Endothelial cell of umbilical vein (primary cell): ENCODE measurements at regions of chr3 and their contacts with region 1.

Region 1: GRCh38 chr3:184250167-184250828 is 826 bp downstream of the EEF1AKMT4 start:
- DNase-seq: peak; percentile 89
- H3K4me3 ChIP-seq: peak overlapping the region; percentile 15 to 100 (median 76)
- H3K27ac ChIP-seq: no peak overlapping the region
- H3K4me1 ChIP-seq: peaks cover 7% of the 10 kb centered on the region
- H3K27me3 ChIP-seq: no peaks in the 10 kb centered on the region
- CTCF ChIP-seq: peak; percentile 88 to 93
- POLR2A ChIP-seq: no peak

Region 2: GRCh38 chr3:183895296-183895695 is 355.0 kb before region 1 on chr3:
- CTCF ChIA-PET with region 1: interaction called, 21 read pairs
- POLR2A ChIA-PET with region 1: no interaction called
- dilution Hi-C with region 1: no loop called
- intact Hi-C with region 1: loop called (anchors 1 kb)
- DNase-seq: peak; percentile 43
- H3K4me3 ChIP-seq: no peak overlapping the region
- H3K27ac ChIP-seq: no peak overlapping the region
- H3K4me1 ChIP-seq: no peaks in the 10 kb centered on the region
- H3K27me3 ChIP-seq: peaks cover 6 to 13% of the 10 kb centered on the region in 2 experiments
- CTCF ChIP-seq: peak; percentile 75 to 78
- POLR2A ChIP-seq: no peak

Region 3: DNA sequence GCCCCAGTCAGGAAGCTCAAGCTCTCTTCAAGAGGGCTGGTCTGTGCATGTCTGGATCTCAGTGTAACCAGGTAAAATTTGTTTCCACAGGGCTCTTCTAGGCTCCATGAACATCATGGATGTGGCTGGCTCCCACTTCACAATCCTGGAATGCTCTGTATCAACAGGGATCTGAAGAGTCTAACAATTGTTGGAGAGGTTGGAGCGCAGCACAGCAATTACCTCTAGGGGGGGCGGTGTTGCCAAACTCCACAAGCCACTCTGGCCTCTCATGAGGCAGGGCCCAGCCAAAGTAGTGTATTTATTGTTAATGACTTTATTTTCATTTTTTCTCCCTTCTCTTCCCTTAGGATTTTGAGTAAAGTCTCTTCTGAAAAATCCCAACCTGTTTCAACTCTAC is 121.3 kb before region 1 on chr3:
- CTCF ChIA-PET with region 1: no interaction called
- POLR2A ChIA-PET with region 1: no interaction called
- dilution Hi-C with region 1: no loop called
- intact Hi-C with region 1: loop called (anchors 1 kb)
- DNase-seq: peak; percentile 36
- H3K4me3 ChIP-seq: no peak overlapping the region
- H3K27ac ChIP-seq: no peak overlapping the region
- H3K4me1 ChIP-seq: peaks cover 9% of the 10 kb centered on the region
- H3K27me3 ChIP-seq: no peaks in the 10 kb centered on the region
- CTCF ChIP-seq: peak; percentile 41 to 45
- POLR2A ChIP-seq: no peak

Region 4: GRCh38 chr3:184154885-184155643 is 95.2 kb before region 1 on chr3 and contains the start of gene DVL3:
- CTCF ChIA-PET with region 1: no interaction called
- POLR2A ChIA-PET with region 1: no interaction called
- dilution Hi-C with region 1: no loop called
- intact Hi-C with region 1: loop called (anchors 1 kb)
- DNase-seq: peak; percentile 40
- H3K4me3 ChIP-seq: peak within 1 kb of the TSS; percentile 78 to 87 (median 83)
- H3K27ac ChIP-seq: peak within 1 kb of the TSS; percentile 25
- H3K4me1 ChIP-seq: peaks cover 17% of the 10 kb centered on the region
- H3K27me3 ChIP-seq: no peaks in the 10 kb centered on the region
- CTCF ChIP-seq: no peak
- POLR2A ChIP-seq: peak; percentile 61
- total RNA-seq, gene DVL3: 59.0 and 61.3 TPM in 2 replicates

Region 5: DNA sequence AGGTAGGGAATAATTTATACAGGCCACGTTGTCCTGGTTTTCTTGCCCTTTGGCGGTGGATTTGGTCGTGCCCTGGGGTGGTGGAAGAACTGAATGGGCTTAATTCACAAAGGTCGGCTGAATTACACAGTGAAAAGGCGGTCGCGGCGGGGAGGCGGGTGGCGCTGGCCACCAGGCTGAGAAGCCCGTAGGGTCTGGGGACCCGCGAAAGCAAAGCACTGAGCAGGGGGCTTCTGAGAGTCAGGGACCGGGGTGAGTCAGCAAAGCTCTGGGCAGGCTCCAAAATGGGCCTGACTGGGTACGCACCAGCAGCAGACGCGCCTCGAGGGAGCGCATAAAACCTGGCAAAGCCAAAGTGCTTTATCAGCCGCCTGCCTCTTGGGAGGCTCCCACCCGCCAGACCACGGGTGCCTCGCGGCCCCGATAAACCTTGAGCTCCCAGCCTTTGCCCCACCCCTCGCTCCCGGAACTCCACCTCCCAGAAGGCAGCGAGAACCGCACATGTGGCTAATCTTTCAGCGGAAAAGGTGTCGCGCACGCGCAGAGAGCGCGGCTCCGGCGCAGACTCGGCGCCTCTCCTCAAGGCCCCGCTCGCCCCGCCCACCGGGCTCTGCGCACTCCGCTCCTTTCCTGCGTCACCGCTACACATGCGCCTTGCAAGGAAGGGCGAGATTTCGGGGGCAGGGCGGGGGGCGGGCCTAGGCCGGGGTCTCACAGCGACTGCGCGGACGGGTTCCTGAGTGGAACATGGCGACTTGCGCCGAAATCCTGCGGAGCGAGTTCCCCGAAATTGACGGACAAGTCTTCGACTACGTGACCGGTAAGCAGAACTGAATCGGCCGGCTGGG is 64.6 kb before region 1 on chr3 and contains the start of gene ABCF3:
- CTCF ChIA-PET with region 1: interaction called, 6 read pairs
- POLR2A ChIA-PET with region 1: no interaction called
- dilution Hi-C with region 1: no loop called
- intact Hi-C with region 1: loop called (anchors 1 kb)
- DNase-seq: peak; percentile 99
- H3K4me3 ChIP-seq: peak within 1 kb of the TSS; percentile 5 to 92 (median 54)
- H3K27ac ChIP-seq: peak within 1 kb of the TSS; percentile 64
- H3K4me1 ChIP-seq: peaks cover 14% of the 10 kb centered on the region
- H3K27me3 ChIP-seq: no peaks in the 10 kb centered on the region
- CTCF ChIP-seq: no peak
- POLR2A ChIP-seq: peak; percentile 87
- total RNA-seq, gene ABCF3: 65.6 and 68.8 TPM in 2 replicates

Region 6: DNA sequence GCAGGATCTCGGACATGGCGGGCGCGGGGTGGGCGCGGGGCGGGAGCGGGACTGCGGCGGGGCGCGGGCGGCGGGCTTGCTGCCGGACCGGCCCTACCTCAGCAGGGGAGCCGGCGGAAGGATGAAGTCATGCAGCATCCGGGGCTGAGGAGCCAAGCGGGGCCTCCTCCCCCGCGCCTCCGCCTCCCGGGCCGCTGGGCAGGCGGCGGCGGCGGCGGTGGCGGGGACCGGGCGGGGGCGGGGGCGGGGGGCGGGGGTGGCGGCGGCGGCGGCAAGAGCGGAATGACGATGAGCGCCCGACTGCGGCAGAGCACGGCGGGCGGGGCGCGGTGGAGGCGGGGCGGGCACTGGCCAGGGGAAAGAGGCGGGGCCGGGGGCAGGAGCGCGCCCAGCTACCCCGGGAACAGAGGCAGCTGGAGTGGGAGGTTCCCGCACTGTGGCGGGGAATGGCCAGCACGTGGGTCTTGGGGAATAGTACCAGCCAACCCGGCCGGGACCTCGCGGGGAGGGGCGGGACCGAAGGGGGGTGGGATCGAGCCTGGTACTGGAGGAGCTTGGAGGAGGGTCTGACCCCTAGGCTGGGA is 11.1 kb after region 1 on chr3 and contains the start of gene CAMK2N2:
- CTCF ChIA-PET with region 1: interaction called, 15 read pairs
- POLR2A ChIA-PET with region 1: no interaction called
- dilution Hi-C with region 1: no loop called
- intact Hi-C with region 1: no loop called
- DNase-seq: no peak
- H3K4me3 ChIP-seq: peak within 1 kb of the TSS in 2 of 3 experiments; percentile 24 to 28
- H3K27ac ChIP-seq: no peak within 1 kb of the TSS
- H3K4me1 ChIP-seq: peaks cover 13% of the 10 kb centered on the region
- H3K27me3 ChIP-seq: peaks cover 26 to 36% of the 10 kb centered on the region in 2 experiments
- CTCF ChIP-seq: no peak
- POLR2A ChIP-seq: no peak
- total RNA-seq, gene CAMK2N2: not detected in 2 replicates

Region 7: DNA sequence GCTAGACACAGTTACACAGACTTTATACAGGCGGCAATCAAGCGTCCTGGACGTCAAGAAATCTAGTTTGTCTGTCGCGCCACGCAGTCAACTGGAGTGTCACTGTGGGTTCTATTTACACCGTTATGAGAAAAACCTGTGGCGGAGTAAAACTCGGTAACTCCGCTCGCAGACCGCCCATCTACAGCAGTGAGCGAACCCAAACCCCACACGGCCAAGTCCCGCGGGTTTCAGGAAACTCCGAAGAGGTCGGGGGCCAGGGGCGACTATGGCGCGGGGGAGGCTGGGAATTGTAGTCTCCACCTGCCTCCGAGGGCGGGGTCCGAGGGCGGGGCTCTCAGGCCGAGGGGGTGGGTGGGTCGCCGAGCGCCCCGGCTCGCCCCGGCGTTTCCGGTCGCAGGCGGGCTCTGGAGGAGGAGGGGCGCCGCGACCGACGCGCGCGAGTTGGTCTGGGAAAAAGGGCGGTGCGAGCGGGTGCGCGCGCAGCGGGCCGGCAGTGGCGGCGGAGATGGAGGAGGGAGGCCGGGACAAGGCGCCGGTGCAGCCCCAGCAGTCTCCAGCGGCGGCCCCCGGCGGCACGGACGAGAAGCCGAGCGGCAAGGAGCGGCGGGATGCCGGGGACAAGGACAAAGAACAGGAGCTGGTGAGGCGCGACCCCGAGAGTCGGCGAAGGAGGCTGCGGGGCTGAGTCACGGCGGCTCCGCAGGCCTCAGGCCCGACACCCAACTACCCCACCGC is 48.6 kb after region 1 on chr3 and contains the start of gene PSMD2:
- CTCF ChIA-PET with region 1: interaction called, 6 read pairs
- POLR2A ChIA-PET with region 1: no interaction called
- dilution Hi-C with region 1: no loop called
- intact Hi-C with region 1: loop called (anchors 1 kb)
- DNase-seq: peak; percentile 96
- H3K4me3 ChIP-seq: peak within 1 kb of the TSS; percentile 71 to 89 (median 88)
- H3K27ac ChIP-seq: peak within 1 kb of the TSS; percentile 70
- H3K4me1 ChIP-seq: peaks cover 13% of the 10 kb centered on the region
- H3K27me3 ChIP-seq: peaks cover 0 to 3% of the 10 kb centered on the region in 2 experiments
- CTCF ChIP-seq: no peak
- POLR2A ChIP-seq: peak; percentile 85
- total RNA-seq, gene PSMD2: 400 and 435 TPM in 2 replicates

Region 8: DNA sequence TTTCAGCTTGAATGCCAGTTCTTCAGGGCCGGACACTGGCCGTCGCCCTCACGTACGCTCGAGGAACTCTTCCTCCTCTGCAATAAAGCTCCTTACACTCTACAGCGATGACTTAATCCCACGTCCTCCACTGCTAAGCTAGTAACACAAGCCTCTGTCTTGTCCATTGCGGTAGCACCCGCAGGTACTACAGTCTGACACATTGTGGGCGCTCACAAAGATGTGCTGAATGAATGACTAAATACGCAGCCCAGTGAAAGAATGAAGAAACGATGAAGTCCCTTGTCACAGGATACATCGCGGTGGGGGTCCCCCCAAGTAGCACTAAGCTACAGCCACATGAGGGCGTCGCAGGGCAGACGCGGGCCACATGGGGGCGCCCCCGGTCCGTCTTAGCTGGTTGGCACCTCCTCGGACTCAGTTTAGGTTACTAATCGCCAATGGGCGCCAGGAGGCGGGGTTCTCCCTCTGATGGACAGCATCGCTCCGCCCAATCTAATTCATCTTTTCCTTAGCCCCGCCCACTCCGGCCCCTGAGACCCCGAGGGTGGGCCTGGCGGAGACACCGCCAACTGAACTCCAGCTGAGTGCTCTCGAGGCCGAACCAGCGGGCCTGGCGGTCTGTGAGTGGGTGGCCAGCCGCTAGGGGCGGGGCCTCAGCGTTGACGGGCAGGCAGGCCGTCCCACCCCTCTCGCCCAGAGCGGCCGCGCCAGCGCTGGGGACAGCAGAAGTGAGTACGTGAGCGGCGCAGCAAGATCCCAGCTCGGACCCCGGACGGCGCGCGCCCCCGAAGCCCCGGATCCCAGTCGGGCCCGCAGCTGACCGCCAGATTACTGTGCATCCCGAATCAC is 311.0 kb after region 1 on chr3 and contains the start of gene EPHB3:
- CTCF ChIA-PET with region 1: no interaction called
- POLR2A ChIA-PET with region 1: no interaction called
- dilution Hi-C with region 1: no loop called
- intact Hi-C with region 1: no loop called
- DNase-seq: peak; percentile 99
- H3K4me3 ChIP-seq: peak within 1 kb of the TSS in 1 of 3 experiments; percentile 16
- H3K27ac ChIP-seq: no peak within 1 kb of the TSS
- H3K4me1 ChIP-seq: peaks cover 4% of the 10 kb centered on the region
- H3K27me3 ChIP-seq: peaks cover 44 to 55% of the 10 kb centered on the region in 2 experiments
- CTCF ChIP-seq: peak; percentile 98 to 99
- POLR2A ChIP-seq: no peak
- total RNA-seq, gene EPHB3: not detected in 2 replicates